ENCODE measurements at regions of chr2 and their contacts with region 1.

Region 1: DNA sequence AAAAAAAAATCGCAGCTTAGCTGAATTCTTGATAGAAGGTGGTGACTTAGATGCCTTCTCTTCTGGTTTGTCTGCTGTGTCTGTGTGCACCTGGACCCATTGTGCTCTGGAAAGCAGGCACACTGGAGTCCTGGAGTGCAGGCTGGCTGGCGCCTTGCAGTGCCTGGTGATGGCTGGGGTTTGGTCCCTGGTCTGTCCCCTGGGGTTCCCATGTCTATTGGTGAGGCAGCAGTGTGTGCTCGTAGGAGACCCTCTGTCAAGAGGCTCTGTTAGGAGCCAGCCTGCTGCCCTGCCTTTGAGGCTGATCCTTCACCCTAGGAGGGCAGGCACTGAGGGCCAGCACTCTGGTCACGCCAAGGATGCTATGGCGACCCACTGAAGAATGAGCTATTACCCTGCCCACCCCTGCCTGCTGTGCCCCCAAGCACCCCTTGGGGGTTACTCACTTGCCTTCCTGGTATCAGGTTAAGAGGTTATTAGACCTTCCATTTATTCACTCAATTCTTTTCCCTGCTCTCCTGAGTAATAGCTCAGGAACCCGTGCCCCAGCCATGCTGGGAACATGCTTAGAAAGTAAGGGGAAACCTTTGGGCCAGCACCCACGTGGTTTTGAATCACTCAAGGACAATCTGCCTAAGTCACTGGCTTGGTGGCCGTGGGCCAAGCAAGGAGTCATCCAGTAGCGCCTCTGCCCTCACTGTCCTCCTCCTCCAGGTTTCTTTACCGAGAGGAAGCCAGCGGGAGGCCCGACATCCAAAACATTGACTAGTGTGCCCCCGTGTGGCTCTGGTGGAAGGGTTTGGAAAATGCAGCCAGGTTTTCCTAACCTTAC is 284.5 kb downstream of the PRKCE start:
- DNase-seq: peak; percentile 86 to 91 (median 91)
- H3K4me3 ChIP-seq: no peak overlapping the region
- H3K27ac ChIP-seq: no peak overlapping the region
- H3K4me1 ChIP-seq: peaks cover 0 to 5% (median 4%) of the 10 kb centered on the region in 4 experiments
- H3K27me3 ChIP-seq: no peaks in the 10 kb centered on the region

Region 2: GRCh38 chr2:45585267-45585861 is 350.6 kb before region 1 on chr2:
- CTCF ChIA-PET with region 1: interaction called, 10 read pairs
- POLR2A ChIA-PET with region 1: no interaction called
- DNase-seq: peak; percentile 71 to 89 (median 87)
- H3K4me3 ChIP-seq: no peak overlapping the region
- H3K27ac ChIP-seq: no peak overlapping the region
- H3K4me1 ChIP-seq: peaks cover 0 to 13% (median 3%) of the 10 kb centered on the region in 4 experiments
- H3K27me3 ChIP-seq: no peaks in the 10 kb centered on the region

Region 3: DNA sequence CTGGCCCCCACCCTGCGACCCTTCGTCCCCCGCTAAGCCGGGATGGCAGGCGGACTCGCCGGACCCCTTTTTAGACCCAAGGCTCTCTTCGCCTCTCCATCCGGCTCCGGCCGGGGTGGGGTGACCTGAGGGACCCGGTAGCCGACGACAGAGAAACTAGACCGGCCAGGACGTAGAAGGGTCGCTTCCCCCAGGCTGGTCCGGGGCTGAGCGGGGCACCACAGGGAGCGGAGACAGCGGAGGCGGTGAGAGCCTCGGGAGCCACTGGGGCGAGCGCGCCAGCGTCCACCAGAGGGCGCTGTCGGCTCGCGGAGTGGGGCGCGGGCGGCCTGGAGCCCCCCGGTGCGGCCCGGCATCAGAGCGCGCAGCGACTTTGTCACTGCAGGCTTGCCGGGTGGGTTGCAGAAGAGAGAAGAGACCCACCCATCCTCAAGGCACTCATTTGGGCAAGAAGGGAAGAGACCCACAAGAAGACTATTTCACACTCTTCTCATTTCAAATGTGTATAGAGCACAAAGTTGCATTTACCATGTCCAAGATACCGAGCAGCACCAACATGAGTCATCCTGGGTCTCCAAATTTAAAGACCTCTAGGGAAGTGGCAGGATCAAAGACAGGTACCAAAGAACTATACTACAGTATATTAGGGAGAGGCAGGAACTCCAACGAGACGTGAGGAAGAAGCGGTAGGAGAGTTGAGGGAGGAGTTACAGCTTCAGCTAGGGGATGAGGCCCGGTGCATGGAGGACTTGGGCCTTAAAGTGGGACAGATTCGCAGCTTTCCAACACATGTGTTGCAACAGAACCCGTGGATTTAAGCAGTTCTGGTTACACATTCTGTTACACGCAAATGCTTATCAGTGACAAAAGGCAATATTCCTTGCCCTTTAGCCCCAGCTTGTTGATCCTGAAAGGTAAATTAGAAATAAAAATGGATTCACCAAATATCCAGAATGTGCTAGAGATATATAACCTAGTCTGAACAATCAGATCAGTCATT is 292.2 kb before region 1 on chr2:
- CTCF ChIA-PET with region 1: interaction called, 16 read pairs
- POLR2A ChIA-PET with region 1: no interaction called
- DNase-seq: peak in 2 of 3 donors; percentile 67 to 70
- H3K4me3 ChIP-seq: peak overlapping the region; percentile 37 to 84 (median 65)
- H3K27ac ChIP-seq: no peak overlapping the region
- H3K4me1 ChIP-seq: peaks cover 0 to 13% (median 6%) of the 10 kb centered on the region in 4 experiments
- H3K27me3 ChIP-seq: peaks cover 0 to 10% (median 6%) of the 10 kb centered on the region in 5 experiments

Region 4: DNA sequence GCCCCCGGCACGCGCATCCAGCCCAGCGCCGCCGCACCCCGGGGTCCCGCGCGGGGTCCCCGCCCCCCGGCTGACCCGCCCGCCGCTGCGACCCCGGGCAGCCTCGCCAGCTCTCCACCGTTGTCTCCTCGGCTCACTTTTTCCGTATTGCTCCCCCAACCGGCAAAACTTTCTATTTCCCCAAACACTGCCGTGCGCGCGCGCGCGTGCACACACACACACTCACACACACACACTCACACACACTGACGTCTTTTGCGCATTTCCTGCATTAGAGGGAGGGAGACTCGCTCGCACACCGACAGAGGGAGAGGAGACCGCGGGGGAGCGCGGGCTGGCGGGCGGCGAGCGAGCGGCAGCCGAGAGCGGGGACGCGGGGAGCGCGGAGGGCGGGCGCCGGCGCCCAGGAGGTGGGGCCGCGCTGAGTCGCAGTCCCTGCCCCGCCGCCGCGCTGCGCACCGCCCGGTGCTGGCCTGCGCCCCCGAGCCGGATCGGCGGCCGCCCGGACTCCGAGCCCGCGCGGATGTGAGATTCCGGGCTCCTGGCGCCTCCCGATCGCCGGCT is 285.1 kb before region 1 on chr2:
- CTCF ChIA-PET with region 1: interaction called, 12 read pairs
- POLR2A ChIA-PET with region 1: no interaction called
- DNase-seq: peak; percentile 98 to 99 (median 98)
- H3K4me3 ChIP-seq: peak overlapping the region; percentile 47 to 92 (median 88)
- H3K27ac ChIP-seq: peak overlapping the region; percentile 54 to 73
- H3K4me1 ChIP-seq: peaks cover 3 to 32% (median 25%) of the 10 kb centered on the region in 4 experiments
- H3K27me3 ChIP-seq: no peaks in the 10 kb centered on the region

Region 5: GRCh38 chr2:45778720-45779171 is 157.3 kb before region 1 on chr2:
- CTCF ChIA-PET with region 1: interaction called, 91 read pairs
- POLR2A ChIA-PET with region 1: no interaction called
- DNase-seq: peak; percentile 81 to 86 (median 82)
- H3K4me3 ChIP-seq: peak overlapping the region in 4 of 7 experiments; percentile 37 to 73 (median 45)
- H3K27ac ChIP-seq: no peak overlapping the region
- H3K4me1 ChIP-seq: peaks cover 0 to 19% (median 11%) of the 10 kb centered on the region in 4 experiments
- H3K27me3 ChIP-seq: no peaks in the 10 kb centered on the region

Region 6: GRCh38 chr2:45974056-45974455 is 38.0 kb after region 1 on chr2:
- CTCF ChIA-PET with region 1: no interaction called
- POLR2A ChIA-PET with region 1: no interaction called
- DNase-seq: no peak
- H3K4me3 ChIP-seq: no peak overlapping the region
- H3K27ac ChIP-seq: no peak overlapping the region
- H3K4me1 ChIP-seq: peaks cover 0 to 5% (median under 1%) of the 10 kb centered on the region in 4 experiments
- H3K27me3 ChIP-seq: no peaks in the 10 kb centered on the region

Region 7: DNA sequence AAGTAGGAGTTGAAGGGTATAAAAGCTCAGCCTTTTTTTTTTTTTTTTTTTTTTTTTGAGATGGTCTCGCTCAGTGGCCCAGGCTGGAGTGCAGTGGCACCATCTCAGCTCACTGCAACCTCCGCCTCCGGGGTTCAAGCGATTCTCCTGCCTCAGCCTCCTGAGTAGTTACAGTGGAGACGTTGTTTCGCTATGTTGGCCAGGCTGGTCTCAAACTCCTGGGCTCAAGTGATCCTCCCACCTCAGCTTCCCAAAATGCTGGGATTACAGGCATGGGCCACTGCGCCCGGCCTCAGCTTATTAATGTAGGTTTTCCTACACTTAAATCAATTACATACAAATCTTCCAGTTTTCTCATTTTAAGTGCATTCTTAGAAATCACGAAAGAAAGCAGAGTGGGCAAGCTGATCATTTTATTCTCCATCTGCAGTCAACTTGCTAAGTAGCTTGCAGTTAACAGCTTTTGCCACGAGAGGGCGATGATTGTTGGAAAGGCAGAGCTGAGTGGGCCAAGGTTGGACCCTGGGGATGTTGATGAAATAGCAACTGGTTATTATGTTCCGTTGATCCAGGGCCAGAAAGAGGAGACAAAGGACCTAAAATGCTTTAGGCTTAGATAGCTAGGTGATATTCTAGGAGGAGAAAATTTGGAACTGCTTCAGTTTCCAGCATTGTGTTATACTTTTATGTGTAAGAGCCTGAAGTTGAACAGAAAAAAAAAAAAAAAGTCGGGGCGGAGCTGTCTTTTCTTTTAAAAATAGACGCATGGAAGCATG is 126.8 kb after region 1 on chr2:
- CTCF ChIA-PET with region 1: no interaction called
- POLR2A ChIA-PET with region 1: no interaction called
- DNase-seq: peak; percentile 78 to 89 (median 84)
- H3K4me3 ChIP-seq: no peak overlapping the region
- H3K27ac ChIP-seq: no peak overlapping the region
- H3K4me1 ChIP-seq: no peaks in the 10 kb centered on the region
- H3K27me3 ChIP-seq: no peaks in the 10 kb centered on the region

Region 8: GRCh38 chr2:46339667-46340459 is 403.9 kb after region 1 on chr2:
- CTCF ChIA-PET with region 1: no interaction called
- POLR2A ChIA-PET with region 1: no interaction called
- DNase-seq: peak in 1 of 3 donors; percentile 22
- H3K4me3 ChIP-seq: no peak overlapping the region
- H3K27ac ChIP-seq: no peak overlapping the region
- H3K4me1 ChIP-seq: peaks cover 0 to 12% (median 3%) of the 10 kb centered on the region in 4 experiments
- H3K27me3 ChIP-seq: no peaks in the 10 kb centered on the region